Ascending aorta (tissue), 2 donors: ENCODE measurements at regions of chr6 and their contacts with region 1.

Region 1: DNA sequence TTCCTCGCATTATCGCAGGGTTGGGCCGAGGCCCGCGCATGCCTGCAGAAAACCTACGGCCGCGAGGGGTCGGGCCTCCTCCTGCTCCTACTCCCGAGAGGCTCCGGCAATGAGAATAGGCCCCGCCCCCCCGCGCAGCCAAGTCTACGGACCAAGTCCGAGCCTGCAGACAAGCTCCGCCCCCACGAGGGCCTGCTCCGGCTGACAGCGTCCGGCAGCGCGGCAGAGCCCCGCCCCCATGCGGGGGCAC is 3.1 kb upstream of the GPSM3 start:
- DNase-seq: peak; percentile 100
- H3K4me3 ChIP-seq: peak overlapping the region; percentile 78 to 88
- H3K27ac ChIP-seq: peak overlapping the region; percentile 99 to 100
- H3K4me1 ChIP-seq: peaks cover 8 to 19% of the 10 kb centered on the region in 2 donors
- H3K27me3 ChIP-seq: no peaks in the 10 kb centered on the region
- CTCF ChIP-seq: peak in 1 of 3 experiments; percentile 63

Region 2: DNA sequence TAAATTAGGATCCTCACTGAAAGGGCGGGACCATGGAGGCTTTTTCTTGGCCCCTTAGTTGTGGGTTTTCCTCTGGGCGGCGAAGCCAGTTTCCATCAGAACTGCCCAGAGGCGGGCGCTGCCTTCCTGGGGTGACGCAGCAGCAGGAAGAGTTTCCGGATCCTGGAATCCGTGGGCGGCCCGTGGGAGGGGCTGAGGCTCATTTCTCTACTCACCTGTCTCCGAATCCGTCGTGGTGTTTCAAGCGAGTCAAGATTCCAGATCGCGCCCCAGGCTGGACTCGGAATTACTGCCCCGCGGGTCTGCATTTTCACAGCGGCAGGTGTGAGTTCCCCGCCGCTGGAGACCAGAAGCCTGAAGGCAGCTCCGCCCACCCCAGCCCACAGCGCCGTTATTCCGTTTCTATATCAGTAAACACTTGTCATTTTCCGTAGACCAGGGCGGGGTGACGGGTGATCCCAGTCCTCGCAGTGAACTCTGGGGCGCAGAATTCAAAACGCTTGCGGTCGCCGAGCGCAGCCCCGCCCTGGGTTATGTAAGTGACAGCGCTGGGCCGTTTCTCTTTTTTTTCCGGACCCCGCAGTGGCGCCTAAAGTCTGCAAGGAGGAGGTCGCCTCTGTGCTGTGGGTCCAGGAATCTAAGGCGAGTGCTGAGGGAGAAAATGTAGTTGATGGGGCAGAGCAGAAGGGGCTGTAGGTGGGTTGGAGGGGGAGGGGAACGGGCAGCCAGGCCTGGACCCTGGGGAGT is 997.8 kb before region 1 on chr6:
- intact Hi-C with region 1: loop called (anchors 5 kb)
- DNase-seq: peak; percentile 75 to 96
- H3K4me3 ChIP-seq: peak overlapping the region; percentile 73 to 81
- H3K27ac ChIP-seq: peak overlapping the region; percentile 95 to 97
- H3K4me1 ChIP-seq: peaks cover 0 to 11% of the 10 kb centered on the region in 2 donors
- H3K27me3 ChIP-seq: no peaks in the 10 kb centered on the region
- CTCF ChIP-seq: no peak

Region 3: DNA sequence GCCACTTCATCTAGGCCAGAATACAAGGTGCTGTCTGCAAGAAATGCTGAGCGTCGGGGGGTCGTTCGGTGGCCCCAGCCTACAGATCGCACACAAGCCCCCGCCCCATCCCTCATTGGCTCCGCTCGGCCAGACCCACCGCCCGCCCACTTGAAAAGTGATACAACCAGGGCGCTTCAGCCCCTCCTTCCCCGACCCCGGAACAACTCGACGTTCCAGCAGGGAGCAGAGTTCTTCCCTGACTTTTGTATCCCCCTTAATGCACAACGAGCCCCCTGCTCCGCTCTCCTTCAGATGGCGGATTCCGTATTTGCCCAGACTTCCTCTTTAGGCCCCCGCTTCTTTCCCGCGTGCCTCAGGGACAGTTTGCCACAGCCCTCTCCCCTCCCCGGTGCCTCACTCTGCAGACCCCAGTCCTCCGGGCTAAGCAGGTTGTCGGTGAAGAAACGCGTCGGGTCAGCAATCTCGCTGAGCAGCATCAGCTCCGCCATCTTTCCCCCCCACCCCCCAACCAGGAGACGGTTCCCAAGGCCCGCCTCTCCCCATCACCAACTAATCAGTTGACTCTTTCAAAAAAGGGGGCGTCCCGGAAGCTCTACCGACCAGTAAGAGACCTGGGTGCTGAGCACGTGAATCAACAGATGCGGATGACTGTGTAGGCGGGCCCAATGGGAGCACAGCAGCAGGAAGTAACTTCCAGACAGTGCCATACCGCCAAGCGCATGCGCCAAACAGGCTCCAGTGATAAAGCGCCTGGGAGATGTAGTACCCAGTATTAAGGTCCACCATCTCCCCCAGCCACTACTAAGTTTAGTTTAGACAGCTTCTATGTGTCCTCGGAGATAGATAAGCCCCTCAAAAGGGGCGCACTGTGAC is 67.6 kb before region 1 on chr6 and contains the start of gene ATF6B:
- intact Hi-C with region 1: loop called (anchors 5 kb)
- DNase-seq: peak; percentile 99 to 100
- H3K4me3 ChIP-seq: peak within 1 kb of the TSS; percentile 87 to 93
- H3K27ac ChIP-seq: peak within 1 kb of the TSS; percentile 89 to 92
- H3K4me1 ChIP-seq: peaks cover 19 to 25% of the 10 kb centered on the region in 2 donors
- H3K27me3 ChIP-seq: no peaks in the 10 kb centered on the region
- CTCF ChIP-seq: no peak
- total RNA-seq, gene ATF6B: 123 TPM

Region 4: DNA sequence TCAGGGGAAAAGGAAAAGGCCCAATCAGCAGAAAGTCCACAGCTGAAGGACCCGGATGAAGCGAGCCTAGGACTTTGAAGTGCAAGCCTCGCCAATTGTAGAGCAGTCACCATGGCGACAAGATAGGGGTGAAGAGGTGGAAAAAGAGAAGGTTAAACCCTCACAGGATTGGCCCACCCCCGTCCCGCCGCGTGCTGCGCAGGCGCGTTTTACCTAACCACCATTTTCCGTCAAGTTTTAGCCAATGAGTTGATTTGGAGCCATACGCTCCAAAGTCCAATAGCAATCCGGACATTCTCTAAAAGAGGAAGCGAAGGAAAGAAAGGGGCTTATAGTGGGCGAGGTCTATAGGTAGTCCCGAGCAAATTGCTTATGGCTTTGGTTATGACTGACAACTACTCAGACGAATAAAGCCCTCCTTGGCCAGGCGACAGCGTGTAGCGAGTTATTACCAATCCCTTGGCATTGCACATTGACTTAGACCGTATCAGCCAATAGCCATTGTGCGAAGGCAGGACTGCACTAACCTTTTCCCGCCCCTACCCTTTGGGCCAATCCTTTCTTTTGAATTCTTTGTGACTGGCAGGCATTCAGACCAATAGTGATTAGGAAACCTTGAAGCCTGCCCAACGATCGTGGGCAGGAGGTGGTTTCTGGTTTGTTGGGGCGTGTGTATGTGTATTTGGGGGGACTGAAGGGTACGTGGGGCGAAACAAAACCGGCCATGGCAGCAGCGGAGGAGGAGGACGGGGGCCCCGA is 17.6 kb before region 1 on chr6 and contains the start of gene RNF5:
- intact Hi-C with region 1: loop called (anchors 1 kb)
- DNase-seq: peak; percentile 96 to 99
- H3K4me3 ChIP-seq: peak within 1 kb of the TSS; percentile 73 to 99
- H3K27ac ChIP-seq: peak within 1 kb of the TSS; percentile 87 to 92
- H3K4me1 ChIP-seq: peaks cover 9 to 27% of the 10 kb centered on the region in 2 donors
- H3K27me3 ChIP-seq: no peaks in the 10 kb centered on the region
- CTCF ChIP-seq: no peak
- total RNA-seq, gene RNF5: 73.0 TPM

Region 5: DNA sequence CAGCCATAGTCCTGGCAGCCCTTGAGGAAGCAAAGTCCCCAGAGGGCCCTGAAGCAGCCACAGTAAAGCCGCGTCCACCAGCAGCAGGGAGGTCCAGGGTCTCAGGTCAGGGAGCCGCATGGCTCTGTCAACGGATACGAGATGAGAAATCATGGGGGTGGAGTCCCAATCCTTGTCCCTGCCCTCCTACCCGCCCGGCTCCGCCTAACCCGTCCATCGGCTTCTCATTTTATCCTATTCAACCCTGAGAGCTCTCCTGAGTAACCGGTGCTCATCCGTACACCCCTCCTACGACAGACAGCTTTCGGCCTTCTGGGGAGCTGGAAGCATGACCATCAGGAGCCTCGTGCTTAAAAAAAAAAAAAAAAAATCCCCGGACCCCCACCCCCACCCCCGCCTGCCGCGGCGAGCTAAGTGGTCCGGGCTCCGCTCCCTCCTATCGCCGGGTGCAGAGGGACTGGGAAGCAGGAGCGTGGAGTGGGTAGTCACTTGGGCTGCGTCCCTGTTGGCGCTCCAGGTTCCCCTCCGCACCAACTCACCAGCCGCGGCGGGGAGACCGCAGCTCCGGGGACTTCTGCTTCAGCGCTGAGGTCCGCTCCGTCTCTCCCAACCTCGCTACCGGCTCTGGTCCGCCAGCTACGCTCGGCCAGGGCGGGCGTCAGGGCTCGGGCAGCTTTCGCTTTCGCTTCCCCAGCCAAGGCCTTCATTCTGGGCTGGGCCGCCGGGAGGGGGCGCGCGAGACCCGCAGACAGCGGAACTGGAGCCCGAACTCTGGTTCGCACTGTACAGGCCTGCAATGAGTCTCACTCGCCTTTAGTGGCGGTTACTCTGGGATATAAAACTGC is 642.8 kb after region 1 on chr6 and contains the start of gene TAP2:
- intact Hi-C with region 1: loop called (anchors 5 kb)
- DNase-seq: peak; percentile 84 to 98
- H3K4me3 ChIP-seq: peak within 1 kb of the TSS; percentile 79 to 85
- H3K27ac ChIP-seq: peak within 1 kb of the TSS; percentile 93 to 94
- H3K4me1 ChIP-seq: peaks cover 0 to 3% of the 10 kb centered on the region in 2 donors
- H3K27me3 ChIP-seq: no peaks in the 10 kb centered on the region
- CTCF ChIP-seq: peak; percentile 95 to 97 (median 96)
- total RNA-seq, gene TAP2: 26.7 TPM

Region 6: DNA sequence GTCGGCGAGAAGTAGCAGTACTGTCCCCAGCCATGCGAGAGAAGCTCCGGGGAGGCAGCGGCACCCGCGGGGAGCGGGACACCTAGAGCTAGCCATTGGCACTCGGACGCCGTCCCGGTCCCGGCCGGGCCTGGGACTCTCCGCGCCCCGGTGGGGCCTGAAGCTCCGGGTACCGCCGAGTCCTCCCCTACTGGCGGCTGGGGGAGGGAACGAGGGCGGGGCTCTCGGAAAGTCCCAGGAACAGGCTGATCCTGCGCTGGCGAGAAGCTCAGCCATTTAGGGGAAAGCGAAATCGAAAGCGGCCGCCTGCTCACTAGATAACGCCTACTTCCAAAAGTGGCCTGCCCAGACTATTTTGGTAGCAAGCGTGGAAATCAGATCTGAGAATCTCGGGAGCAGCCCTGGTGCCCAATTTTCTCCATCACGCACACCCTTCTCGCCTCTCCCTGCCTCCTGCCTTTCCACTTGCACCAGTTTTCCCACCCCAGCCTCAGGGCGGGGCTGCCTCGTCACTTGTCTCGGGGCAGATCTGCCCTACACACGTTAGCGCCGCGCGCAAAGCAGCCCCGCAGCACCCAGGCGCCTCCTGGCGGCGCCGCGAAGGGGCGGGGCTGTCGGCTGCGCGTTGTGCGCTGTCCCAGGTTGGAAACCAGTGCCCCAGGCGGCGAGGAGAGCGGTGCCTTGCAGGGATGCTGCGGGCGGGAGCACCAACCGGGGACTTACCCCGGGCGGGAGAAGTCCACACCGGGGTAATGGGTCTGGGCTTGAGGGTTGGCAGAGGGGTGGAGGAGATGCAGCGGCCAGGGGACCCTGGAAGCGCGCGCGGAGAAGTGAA is 658.2 kb after region 1 on chr6 and contains the starts of genes PSMB9 and TAP1:
- intact Hi-C with region 1: loop called (anchors 5 kb)
- DNase-seq: peak; percentile 89 to 97
- H3K4me3 ChIP-seq: peak within 1 kb of the TSS; percentile 86 to 89
- H3K27ac ChIP-seq: peak within 1 kb of the TSS; percentile 92 to 97
- H3K4me1 ChIP-seq: peaks cover 4 to 9% of the 10 kb centered on the region in 2 donors
- H3K27me3 ChIP-seq: no peaks in the 10 kb centered on the region
- CTCF ChIP-seq: peak; percentile 88 to 95 (median 90)
- total RNA-seq, gene PSMB9: 42.8 TPM
- total RNA-seq, gene TAP1: 51.2 TPM

Region 7: DNA sequence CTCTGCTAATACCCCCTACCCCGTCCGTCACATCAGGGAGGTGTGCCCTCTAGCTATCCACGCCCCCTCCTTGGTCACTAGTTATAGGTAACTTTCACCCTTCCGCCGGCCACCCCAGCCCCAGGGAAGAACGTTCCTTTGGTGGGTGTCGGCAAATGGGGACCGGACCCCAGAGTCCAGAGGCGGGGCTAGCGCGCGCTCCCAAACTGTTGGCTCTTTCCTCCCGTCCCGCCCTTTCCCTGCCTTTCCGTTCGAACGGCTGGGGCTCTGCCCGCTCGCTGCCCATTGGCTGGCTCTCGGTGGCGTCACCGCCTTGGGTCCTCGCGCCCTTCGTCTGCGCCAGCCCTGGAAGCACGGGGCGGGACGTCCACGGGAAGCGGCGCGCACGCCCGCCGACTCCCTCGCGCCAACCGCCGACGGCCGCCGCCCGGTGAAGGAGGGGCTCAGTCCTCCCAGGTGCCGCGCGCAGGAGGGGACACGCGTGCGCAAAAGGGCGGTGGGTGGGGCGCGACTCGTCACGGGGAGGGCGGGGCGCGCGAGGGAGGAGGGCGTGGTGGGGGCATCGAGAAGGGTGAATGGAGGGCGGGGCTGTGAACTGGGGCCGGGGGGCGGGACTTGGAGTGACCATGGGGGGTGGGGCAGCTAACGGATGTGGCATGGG is 1214.6 kb after region 1 on chr6:
- intact Hi-C with region 1: loop called (anchors 5 kb)
- DNase-seq: peak; percentile 89 to 98
- H3K4me3 ChIP-seq: peak overlapping the region; percentile 84 to 98
- H3K27ac ChIP-seq: peak overlapping the region; percentile 96 to 99
- H3K4me1 ChIP-seq: peaks cover 10% of the 10 kb centered on the region in 2 donors
- H3K27me3 ChIP-seq: no peaks in the 10 kb centered on the region
- CTCF ChIP-seq: no peak